ENCODE measurements at regions of chr6 and their contacts with region 1.

Region 1: DNA sequence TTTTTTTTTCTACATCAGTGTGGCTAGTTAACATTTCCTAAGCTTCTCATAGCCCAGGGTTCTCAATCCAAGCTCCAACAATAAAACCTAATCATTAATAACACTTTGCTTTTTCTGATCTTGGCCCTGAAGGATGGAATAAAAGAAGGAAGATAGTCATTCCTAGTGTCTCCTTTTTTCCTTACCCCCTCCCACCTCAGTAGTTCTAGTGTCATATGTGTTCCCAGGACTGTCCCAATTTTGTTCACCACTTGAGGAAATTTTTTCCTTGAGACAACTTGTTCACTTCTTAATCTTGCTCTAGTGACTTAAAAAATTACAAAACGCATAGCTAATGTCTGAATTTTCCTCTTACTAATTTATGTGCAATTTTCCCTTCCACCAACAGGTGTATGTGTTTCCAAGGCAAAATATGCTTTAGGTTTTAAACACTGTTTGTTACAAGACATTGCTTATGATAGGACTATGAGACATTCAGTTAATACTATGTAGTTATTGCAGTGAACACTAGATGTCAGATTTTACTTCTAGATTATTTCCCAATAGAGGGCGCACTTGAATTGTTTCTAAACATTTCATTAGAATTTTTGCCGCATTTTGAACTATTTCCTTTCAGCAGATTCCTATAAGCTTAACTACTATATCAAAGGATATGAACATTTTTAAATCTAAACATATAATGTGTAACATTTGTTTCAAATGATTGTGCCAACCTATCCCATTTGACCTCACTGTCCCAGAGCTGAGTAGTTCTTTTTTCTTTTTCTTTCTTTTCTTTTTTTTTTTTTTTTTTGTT is 18.5 kb upstream of the C6orf141 start:
- DNase-seq: no peak

Region 2: DNA sequence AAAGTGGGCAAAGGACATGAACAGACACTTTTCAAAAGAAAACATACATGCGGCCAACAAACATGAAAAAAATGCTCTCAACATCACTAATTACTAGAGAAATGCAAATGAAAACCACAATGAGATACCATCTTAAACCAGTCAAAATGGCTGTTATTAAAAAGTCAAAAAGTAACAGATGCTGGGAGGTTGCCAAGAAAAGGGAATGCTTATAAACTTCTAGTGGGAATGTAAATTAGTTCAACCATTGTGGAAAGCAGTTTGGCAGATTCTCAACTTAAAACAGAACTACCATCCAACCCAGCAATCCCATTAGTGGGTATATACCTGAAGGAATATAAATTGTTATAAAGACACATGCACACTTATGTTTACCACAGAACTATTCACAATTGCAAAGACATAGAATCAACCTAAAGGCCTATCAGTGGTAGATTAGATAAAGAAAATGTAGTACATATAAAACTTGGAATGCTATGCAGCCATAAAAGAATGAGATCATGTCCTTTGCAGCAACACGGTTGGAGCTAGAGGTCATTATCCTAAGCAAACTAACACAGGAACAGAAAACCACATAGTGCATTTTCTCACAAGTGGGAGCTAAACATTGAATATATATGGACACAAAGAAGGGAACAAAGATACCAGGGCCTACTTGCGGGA is 52.5 kb before region 1 on chr6:
- intact Hi-C with region 1: no loop called
- DNase-seq: no peak

Region 3: DNA sequence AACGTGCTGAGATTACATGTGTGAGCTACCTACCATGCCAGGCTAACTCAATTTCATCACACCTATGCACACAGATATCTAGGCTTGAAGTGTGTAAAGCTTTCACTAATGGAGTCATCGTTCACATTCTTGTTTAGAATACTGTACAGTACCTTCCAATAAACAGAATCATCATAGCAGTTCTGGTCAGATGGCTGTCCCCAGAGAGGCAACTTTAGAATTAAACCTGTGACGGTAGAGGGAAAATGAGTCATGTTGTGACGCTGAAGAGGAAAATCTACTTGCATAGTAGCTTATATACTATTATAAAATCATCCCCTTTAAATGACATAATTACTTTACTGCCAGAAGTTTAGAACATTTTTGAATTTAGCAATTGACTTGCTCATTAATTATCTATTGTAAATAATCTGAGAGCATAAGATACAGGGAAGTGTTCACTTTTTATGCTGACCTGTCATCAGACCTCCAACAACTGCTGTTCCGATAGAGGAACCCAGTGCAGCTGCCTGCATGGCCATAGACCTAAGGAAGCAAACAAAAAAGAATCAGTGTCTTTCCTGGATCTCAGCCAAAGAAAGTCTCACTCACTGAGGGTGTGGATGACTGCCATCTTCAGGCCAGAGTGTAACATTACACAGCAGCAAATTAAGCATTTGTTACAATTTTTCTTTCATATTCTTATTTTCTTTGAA is 74.9 kb after region 1 on chr6:
- intact Hi-C with region 1: loop called (anchors 1 kb)
- DNase-seq: peak in 4 of 10 donors; percentile 11 to 74 (median 16)

Region 4: DNA sequence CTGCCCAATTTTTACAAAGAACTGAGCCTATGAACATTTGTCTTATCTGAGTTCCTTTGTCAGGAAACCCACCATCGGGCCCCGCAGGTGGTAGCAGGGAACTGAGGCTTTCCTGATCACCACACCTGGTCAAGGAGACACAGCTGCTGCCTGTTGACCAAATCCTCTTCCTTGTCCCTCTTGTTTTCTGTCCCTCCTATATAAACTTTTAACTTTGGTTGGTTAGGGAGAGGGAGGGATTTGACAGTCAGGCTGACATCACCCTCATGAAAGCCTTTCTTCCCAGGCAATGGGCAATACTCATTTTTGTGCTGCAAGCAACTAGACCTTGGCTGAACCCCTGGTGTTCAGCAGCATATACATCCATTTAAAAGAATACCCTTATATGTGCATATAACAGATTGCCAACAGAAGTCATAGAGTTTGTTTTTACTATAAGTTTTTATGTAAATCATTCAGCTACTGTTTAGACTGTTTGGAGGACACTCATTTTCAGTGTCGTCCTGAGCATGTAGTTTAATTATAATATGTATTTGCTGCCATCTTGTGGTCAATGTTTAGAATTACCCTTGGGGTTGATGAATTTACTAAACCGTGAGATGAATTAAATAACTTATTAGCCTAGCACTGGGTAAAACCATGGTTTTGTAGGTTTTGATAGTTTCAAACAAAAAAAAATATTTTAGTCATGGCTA is 317.4 kb after region 1 on chr6:
- intact Hi-C with region 1: loop called (anchors 2 kb)
- DNase-seq: no peak